HepG2 (cell line): ENCODE measurements at regions of chr14 and their contacts with region 1.

Region 1: DNA sequence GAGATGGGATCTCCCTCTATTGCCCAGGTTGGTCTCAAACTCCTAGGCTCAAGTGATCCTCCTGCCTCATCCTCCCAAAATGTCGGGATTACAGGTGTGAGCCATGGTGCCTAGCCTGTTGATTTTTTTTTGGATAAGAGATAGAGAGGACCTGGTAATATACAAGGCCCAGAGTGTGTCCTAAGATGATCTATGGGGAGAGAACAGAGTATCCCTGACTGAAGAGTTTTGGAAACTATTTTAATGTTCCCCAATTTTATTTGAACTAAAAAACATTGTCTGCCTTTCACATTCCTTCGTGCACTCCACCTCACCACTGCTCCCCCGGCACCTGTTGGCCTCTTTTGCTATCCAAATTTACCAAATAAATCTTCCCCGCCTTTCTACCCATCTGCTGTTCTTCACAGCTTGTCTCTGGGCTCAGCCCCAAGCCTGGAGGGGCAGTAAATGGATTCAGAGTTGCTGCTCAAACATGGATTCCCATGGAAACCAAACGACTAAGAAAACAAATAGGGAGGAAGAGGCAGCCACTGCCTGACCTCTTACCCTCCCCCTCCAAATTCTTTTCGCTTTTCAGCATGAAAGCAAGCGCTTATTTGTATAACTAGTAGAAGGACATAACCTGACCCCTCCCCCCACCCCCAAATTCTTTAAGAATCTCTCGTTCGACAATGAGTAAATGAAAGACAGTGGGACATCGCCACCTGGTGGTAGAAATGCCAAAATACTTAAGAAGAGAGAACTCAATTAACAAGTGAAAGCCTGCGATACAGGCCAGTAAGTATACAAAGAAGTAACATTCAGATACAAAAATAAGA is 22.6 kb downstream of the OR10G3 start:
- DNase-seq: peak; percentile 99
- ATAC-seq: peak; percentile 95
- H3K4me3 ChIP-seq: peak overlapping the region; percentile 27 to 69 (median 32)
- H3K27ac ChIP-seq: peak overlapping the region; percentile 60
- H3K4me1 ChIP-seq: peaks cover 26% of the 10 kb centered on the region
- H3K27me3 ChIP-seq: no peaks in the 10 kb centered on the region
- CTCF ChIP-seq: peak; percentile 85
- EP300 ChIP-seq: peak; percentile 70 to 95
- POLR2A ChIP-seq: no peak
- RAD21 ChIP-seq: peak; percentile 89

Region 2: DNA sequence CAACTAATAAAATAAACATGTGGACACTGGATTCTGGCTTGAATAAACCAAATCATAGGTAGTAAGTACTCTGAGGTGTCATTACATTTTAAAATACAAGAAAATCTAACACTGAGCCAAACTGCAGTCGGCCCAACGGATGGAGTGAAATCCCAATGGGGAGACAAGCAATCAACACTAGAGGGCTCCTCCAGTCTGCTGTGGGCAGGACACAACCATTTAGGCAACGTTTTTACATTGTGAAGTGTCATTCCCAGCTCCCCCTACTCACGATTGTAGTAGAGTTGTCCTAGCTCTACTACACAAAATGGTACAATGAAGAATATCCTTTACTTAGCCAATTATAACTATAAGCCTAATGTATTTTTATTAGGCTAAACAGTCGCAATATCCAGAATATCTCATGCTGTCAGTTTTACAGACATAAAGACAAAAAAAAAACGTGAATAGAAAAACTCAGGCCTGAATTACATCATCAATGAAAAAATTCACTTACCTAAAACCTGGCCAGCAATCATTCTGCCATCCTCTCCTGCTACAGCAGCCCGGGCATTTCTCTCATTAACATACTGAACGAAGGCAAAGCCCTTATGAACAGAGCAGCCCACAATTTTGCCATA is 323.7 kb before region 1 on chr14:
- CTCF ChIA-PET with region 1: no interaction called
- POLR2A ChIA-PET with region 1: no interaction called
- in situ Hi-C with region 1: no loop called
- intact Hi-C with region 1: loop called (anchors 10 kb)
- DNase-seq: peak; percentile 40
- ATAC-seq: peak; percentile 64
- H3K4me3 ChIP-seq: no peak overlapping the region
- H3K27ac ChIP-seq: no peak overlapping the region
- H3K4me1 ChIP-seq: peaks cover 31% of the 10 kb centered on the region
- H3K27me3 ChIP-seq: no peaks in the 10 kb centered on the region
- CTCF ChIP-seq: peak; percentile 58
- EP300 ChIP-seq: no peak
- POLR2A ChIP-seq: 0 out of 4 replicates have a peak, but pooled peaks of 1 of the 2 experiments have one; percentile 28
- RAD21 ChIP-seq: no peak; the same call in 1 of the 2 replicates

Region 3: GRCh38 chr14:21437063-21437901 is 120.0 kb before region 1 on chr14:
- CTCF ChIA-PET with region 1: no interaction called
- POLR2A ChIA-PET with region 1: interaction called, 4 read pairs
- in situ Hi-C with region 1: no loop called
- intact Hi-C with region 1: loop called (anchors 1 kb)
- DNase-seq: peak; percentile 100
- ATAC-seq: peak; percentile 97
- H3K4me3 ChIP-seq: peak overlapping the region; percentile 85 to 96 (median 87)
- H3K27ac ChIP-seq: peak overlapping the region; percentile 92
- H3K4me1 ChIP-seq: peaks cover 46% of the 10 kb centered on the region
- H3K27me3 ChIP-seq: peaks cover 0 to 4% of the 10 kb centered on the region in 2 experiments; a peak in 1 of 5 replicates
- CTCF ChIP-seq: no peak; the same call in 1 of the 2 replicates
- EP300 ChIP-seq: 0 out of 4 replicates have a peak, but pooled peaks of 1 of the 2 experiments have one; percentile 30
- POLR2A ChIP-seq: peak; percentile 71 to 79
- RAD21 ChIP-seq: peak; percentile 61

Region 4: DNA sequence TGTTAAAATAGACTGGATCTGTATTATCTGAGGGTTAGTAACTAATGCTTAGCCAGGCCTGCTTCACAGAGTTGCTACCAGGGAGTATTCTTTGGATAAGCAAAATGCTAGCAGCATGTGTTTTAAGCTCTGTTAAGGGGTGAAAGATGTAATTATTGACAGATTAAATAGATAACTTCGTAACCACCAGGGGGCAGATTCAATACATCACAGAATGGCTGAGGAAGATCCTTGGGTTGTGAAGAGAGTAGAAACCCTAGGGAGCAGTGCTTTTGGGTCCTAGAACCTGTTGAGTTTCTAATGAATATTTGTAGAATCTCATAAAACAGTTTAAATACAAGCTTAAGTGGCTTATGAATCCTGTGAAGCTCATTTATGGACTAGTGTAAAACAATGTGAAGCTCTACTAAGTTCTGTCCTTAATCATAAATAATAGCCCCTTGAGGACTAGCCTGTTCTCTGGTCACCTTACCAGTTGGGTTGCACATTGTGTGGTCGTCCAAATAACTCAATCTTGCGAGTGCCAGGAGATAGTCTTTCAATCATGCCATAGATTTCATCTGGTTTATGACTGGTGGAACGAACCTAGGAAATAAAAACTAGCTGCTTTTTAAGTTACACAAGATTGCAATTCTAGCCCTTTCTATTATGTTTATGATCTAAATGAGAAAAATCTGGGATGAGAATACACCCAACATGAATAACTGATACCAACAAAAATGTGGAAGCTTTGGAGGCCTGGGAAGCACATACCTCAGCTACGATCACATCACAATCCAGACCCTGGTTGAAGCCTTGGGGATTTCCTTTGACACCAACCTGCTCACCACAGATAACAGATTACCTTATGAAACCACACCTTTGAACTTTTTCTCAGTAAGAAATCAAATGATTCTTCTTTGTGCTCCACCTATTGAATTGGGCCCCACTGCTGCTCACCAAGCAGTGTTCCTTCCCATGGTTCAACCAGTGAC is 58.5 kb before region 1 on chr14:
- CTCF ChIA-PET with region 1: interaction called, 104 read pairs
- POLR2A ChIA-PET with region 1: interaction called, 8 read pairs
- in situ Hi-C with region 1: loop called (anchors 5 kb)
- intact Hi-C with region 1: loop called (anchors 1 kb)
- DNase-seq: peak; percentile 77
- ATAC-seq: peak; percentile 78
- H3K4me3 ChIP-seq: no peak overlapping the region
- H3K27ac ChIP-seq: peak overlapping the region; percentile 41
- H3K4me1 ChIP-seq: no peaks in the 10 kb centered on the region
- H3K27me3 ChIP-seq: no peaks in the 10 kb centered on the region
- CTCF ChIP-seq: peak; percentile 79
- EP300 ChIP-seq: no peak
- POLR2A ChIP-seq: 0 out of 4 replicates have a peak, but pooled peaks of 1 of the 2 experiments have one; percentile 18
- RAD21 ChIP-seq: peak; percentile 82

Region 5: GRCh38 chr14:21525962-21526671 is 31.2 kb before region 1 on chr14 and contains the start of gene SALL2:
- CTCF ChIA-PET with region 1: no interaction called
- POLR2A ChIA-PET with region 1: interaction called, 10 read pairs
- in situ Hi-C with region 1: no loop called
- intact Hi-C with region 1: loop called (anchors 1 kb)
- DNase-seq: peak; percentile 79
- ATAC-seq: peak; percentile 84
- H3K4me3 ChIP-seq: peak within 1 kb of the TSS; percentile 77 to 83 (median 78)
- H3K27ac ChIP-seq: peak within 1 kb of the TSS; percentile 69
- H3K4me1 ChIP-seq: peaks cover 40% of the 10 kb centered on the region
- H3K27me3 ChIP-seq: no peaks in the 10 kb centered on the region
- CTCF ChIP-seq: no peak
- EP300 ChIP-seq: no peak
- POLR2A ChIP-seq: peak in 1 of 2 experiments; percentile 93; a peak in 2 of 4 replicates
- RAD21 ChIP-seq: no peak
- total RNA-seq, gene SALL2: 4.9 and 7.6 TPM in 2 replicates